Psoas muscle (tissue), 8 donors: ENCODE measurements at regions of chr22 and their contacts with region 1.

Region 1: DNA sequence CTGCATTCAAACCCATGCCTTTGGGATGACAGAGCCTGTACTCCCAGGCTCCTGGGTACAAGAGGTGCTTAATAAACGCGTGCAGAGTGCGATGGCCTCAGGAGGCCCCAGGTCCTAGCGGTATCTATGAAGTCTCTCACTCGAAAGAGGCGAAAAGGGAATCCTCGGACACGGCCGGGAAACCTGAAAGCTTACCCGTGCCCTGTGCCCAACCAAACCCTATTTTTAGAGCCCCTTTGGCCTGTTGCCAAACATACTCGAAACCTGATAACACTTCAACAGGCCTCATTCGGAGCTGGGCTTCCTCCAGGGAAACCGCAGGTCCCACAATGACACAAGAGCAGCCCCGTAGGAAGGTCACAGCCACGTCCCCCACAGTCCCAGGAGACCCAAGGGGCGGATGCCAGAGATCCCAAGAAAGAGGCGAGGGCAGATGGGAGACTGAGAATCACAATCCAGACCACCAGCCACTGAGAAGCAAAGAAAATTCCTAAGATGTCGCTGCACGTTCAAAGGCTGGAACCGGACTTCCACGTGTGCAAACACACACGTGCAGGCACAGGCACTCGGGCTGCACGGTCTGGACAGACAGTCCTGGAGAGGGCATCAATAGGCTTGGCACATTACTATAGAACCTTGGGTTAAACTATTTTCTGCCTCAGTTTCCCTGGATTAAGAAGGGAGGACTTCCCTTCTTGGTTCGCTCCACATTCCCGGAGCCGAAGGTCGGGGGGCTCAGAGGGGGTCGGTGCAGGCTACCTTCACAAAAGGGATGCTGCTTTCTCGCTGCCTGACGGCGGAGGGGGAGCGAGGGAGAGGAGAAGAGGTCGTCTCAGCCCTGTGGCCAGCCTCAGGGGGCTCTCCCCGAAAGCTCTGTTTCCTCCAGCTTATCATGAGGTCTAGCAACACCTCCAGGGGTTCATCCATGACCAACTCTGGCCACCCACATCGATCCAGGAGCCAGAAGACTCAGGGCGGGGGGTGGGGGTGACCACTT is 8.2 kb downstream of the PDGFB start:
- DNase-seq: peak; percentile 74 to 87
- ATAC-seq: peak; percentile 53 to 75 (median 66)
- H3K4me3 ChIP-seq: peak overlapping the region; percentile 38
- H3K27ac ChIP-seq: peak overlapping the region; percentile 87
- H3K4me1 ChIP-seq: peaks cover 93% of the 10 kb centered on the region
- H3K27me3 ChIP-seq: no peaks in the 10 kb centered on the region
- CTCF ChIP-seq: no peak

Region 2: DNA sequence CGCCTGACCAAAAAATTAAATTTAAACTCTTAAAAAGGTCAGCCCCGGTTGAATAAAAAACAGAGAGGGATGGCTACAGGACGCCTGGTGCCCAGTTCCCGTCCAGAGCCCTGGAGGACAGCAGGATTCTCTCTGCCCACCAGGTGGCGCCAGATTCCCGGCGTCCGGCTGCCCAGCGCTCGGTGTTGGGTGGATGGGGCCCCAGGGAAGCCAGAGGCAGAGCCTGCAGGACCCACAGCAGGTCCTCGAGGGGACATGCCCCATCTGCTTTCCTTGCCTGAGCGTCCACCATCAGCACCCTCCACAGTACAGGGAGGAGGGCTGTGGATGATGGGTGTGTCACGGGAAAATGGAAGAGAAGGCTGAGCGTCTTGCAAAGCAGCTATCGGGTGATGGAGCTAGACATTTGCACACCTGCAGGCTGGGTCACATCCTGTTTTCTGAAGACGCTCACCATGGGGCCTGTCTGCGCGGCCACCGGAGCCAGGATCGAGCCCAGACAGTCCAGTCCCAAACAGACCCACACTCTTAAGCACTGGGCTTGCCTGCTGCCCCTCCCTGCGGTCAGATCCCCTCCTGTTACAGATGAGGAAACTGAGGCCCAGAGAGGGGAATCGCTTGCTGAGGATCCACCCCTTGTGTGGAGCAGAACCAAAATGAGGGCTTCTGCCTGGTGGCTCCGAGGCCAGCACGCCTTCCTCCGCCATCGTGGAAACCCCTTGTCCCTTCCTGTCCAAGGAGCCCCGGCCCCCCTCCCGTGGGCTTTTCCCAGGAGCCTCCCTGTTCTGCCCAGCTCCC is 65.6 kb before region 1 on chr22:
- intact Hi-C with region 1: loop called in 1 of 2 experiments (anchors 5 kb)
- DNase-seq: peak; percentile 87 to 93
- ATAC-seq: peak; percentile 87 to 95 (median 90)
- H3K4me3 ChIP-seq: no peak overlapping the region
- H3K27ac ChIP-seq: no peak overlapping the region
- H3K4me1 ChIP-seq: peaks cover 47% of the 10 kb centered on the region
- H3K27me3 ChIP-seq: no peaks in the 10 kb centered on the region
- CTCF ChIP-seq: peak; percentile 96

Region 3: GRCh38 chr22:39253435-39254070 is 16.9 kb after region 1 on chr22:
- intact Hi-C with region 1: loop called in 1 of 2 experiments (anchors 2 kb)
- DNase-seq: peak; percentile 73 to 87
- ATAC-seq: peak; percentile 77 to 84 (median 82)
- H3K4me3 ChIP-seq: peak overlapping the region; percentile 46
- H3K27ac ChIP-seq: peak overlapping the region; percentile 99
- H3K4me1 ChIP-seq: peaks cover 46% of the 10 kb centered on the region
- H3K27me3 ChIP-seq: no peaks in the 10 kb centered on the region
- CTCF ChIP-seq: no peak

Region 4: GRCh38 chr22:39277155-39277607 is 40.6 kb after region 1 on chr22:
- intact Hi-C with region 1: loop called in 1 of 2 experiments (anchors 5 kb)
- DNase-seq: no peak
- ATAC-seq: peak; percentile 64 to 86 (median 82)
- H3K4me3 ChIP-seq: no peak overlapping the region
- H3K27ac ChIP-seq: peak overlapping the region; percentile 75
- H3K4me1 ChIP-seq: peaks cover 18% of the 10 kb centered on the region
- H3K27me3 ChIP-seq: no peaks in the 10 kb centered on the region
- CTCF ChIP-seq: no peak

Region 5: DNA sequence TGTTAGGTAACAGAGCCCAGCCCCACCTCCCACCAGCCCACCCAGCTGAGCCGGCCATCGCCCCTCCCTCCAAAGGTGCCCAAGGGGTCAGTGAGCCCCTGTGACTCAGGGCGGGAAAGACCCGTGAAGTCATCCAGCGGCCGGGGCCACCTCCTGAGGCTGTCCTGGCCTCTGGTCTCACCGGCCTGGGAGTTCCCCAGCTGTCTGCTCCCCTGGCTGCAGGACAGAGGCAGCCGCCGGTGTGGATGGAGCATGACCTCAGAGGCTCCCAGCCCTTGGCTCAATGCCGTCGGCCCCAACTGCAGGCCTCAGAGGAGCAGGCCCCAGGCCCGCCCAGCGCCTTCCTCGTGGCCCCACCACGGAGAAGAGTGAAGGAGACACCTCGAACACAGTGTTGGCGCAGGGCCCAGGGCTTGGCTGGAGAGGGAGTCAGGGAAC is 54.1 kb after region 1 on chr22:
- intact Hi-C with region 1: loop called in 1 of 2 experiments (anchors 2 kb)
- DNase-seq: peak; percentile 79 to 91
- ATAC-seq: peak; percentile 86 to 95 (median 92)
- H3K4me3 ChIP-seq: no peak overlapping the region
- H3K27ac ChIP-seq: peak overlapping the region; percentile 78
- H3K4me1 ChIP-seq: peaks cover 26% of the 10 kb centered on the region
- H3K27me3 ChIP-seq: no peaks in the 10 kb centered on the region
- CTCF ChIP-seq: no peak

Region 6: GRCh38 chr22:39306581-39307361 is 70.2 kb after region 1 on chr22:
- intact Hi-C with region 1: loop called (anchors 5 kb)
- DNase-seq: no peak
- ATAC-seq: peak in 1 of 4 donors; percentile 46
- H3K4me3 ChIP-seq: no peak overlapping the region
- H3K27ac ChIP-seq: no peak overlapping the region
- H3K4me1 ChIP-seq: peaks cover 11% of the 10 kb centered on the region
- H3K27me3 ChIP-seq: no peaks in the 10 kb centered on the region
- CTCF ChIP-seq: peak; percentile 23

Region 7: DNA sequence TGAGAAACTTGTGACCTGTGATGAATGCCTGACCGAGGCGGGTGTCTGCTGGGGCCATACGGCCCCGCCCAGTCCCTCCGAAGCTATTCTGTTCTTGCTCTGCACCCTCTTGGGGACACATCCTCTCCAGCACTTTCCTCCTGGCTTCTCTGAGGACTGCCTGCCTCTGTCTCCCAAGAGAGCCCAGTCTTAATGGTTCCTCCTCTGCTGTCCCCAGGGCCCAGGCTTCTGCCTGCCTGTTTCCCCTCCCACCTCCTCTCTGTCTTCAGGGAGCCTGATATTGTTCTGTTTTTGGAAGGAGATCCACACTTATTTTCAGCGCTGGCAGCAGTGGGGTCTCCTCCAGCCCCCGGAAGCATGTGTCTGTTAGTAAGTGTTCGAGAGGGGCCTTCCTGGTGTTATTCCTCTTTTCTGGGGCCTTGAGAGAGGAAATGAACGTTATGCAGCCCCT is 131.9 kb after region 1 on chr22:
- intact Hi-C with region 1: no loop called
- DNase-seq: no peak
- ATAC-seq: no peak
- H3K4me3 ChIP-seq: no peak overlapping the region
- H3K27ac ChIP-seq: no peak overlapping the region
- H3K4me1 ChIP-seq: peaks cover 8% of the 10 kb centered on the region
- H3K27me3 ChIP-seq: no peaks in the 10 kb centered on the region
- CTCF ChIP-seq: no peak